ENCODE measurements at regions of chr19 and their contacts with region 1.

Region 1: GRCh38 chr19:10580979-10581631 is 6.0 kb downstream of the AP1M2 start:
- DNase-seq: peak; percentile 81
- H3K4me3 Mint-ChIP-seq: no peak overlapping the region
- H3K27ac Mint-ChIP-seq: no peak overlapping the region
- H3K4me1 Mint-ChIP-seq: peaks cover 12% of the 10 kb centered on the region
- H3K27me3 Mint-ChIP-seq: peaks cover 6% of the 10 kb centered on the region

Region 2: DNA sequence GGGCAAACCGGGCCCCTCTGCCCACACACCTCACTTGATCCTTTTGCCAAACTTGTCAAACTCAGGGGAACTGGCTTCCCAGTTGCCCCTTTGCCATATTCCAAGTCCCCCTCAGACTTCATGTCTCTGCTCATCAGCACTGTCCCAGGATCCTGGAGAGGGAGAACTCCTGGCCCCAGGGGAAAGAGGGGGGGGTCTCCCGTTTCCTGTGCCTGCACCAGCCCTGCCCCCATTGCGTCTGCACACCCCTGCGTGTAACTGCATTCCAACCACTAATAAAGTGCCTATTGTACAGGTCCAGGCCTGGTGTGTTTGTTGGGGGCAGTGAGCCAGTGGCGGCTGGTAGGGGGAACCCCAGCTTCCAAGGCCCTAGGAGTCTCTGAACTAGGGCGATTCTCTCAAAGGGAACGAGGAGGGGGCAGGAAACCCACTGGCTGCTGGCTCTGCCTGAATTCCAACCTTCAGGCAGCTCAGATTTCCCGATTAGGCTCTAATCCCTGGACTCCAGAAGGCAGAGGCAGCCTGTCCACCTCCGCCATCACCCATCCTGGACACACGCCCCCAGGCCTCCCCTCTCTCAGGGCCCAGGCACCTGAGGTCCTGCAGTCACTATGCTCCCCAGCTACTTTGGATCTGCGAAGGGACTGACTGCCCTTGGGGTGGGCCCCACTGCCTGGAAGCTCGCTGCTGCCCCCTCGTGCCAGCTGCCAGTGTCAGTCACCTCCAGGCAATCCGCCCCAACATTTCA is 63.3 kb after region 1 on chr19:
- intact Hi-C with region 1: loop called (anchors 1 kb)
- DNase-seq: peak; percentile 63
- H3K4me3 Mint-ChIP-seq: no peak overlapping the region
- H3K27ac Mint-ChIP-seq: peak overlapping the region; percentile 12
- H3K4me1 Mint-ChIP-seq: peaks cover 22% of the 10 kb centered on the region
- H3K27me3 Mint-ChIP-seq: no peaks in the 10 kb centered on the region

Measured in activated T-helper 1 cell treated with anti-CD3 and anti-CD28 coated beads, Interleukin-12 subunit alpha, Interleukin-12 subunit beta, Interleukin-2, Interleukin-4 antibody, amounts not matched to agents 30 ng/mL and 10 ng/mL and 1 ng/mL, durations not matched to agents 14 hours and 24 hours and 36 hours (primary cell).